Dorsolateral prefrontal cortex (tissue), 120 donors: ENCODE measurements at regions of chr5 and their contacts with region 1.

Region 1: GRCh38 chr5:113513384-113514288 is at the start of gene YTHDC2:
- DNase-seq: peak; percentile 75 to 91 (median 86)
- H3K4me3 ChIP-seq: peak within 1 kb of the TSS; percentile 63 to 98 (median 90)
- H3K27ac ChIP-seq: peak within 1 kb of the TSS; percentile 63 to 97 (median 90)
- H3K27me3 ChIP-seq: no peaks in the 10 kb centered on the region
- CTCF ChIP-seq: peak in 48 of 56 donors; percentile 7 to 59 (median 40)
- total RNA-seq, gene YTHDC2: 26.6 to 63.8 (median 40.6) TPM

Region 2: DNA sequence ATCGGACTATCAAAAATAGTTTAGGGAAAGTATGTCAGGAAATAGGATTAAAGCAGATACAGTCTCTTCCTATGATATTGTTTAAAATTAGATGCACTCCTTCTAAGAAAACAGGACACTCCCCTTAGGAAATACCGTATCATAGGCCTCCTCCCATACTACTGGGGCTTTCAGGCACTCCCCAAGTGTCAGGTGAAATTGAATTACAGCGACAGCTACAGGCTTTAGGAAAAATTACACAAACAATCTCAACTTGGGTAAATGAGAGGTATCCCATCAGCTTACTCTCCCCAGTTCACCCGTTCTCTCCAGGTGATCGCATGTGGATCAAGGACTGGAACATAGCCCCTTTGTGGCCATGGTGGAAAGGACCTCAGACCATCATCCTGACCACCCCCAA is 984.1 kb before region 1 on chr5:
- intact Hi-C with region 1: no loop called
- DNase-seq: no peak
- H3K4me3 ChIP-seq: no peak overlapping the region
- H3K27ac ChIP-seq: no peak overlapping the region
- H3K27me3 ChIP-seq: no peaks in the 10 kb centered on the region
- CTCF ChIP-seq: peak in 55 of 56 donors; percentile 14 to 73 (median 44)

Region 3: GRCh38 chr5:112976432-112977309 is 537.0 kb before region 1 on chr5 and contains the start of gene DCP2:
- intact Hi-C with region 1: loop called (anchors 2 to 5 kb)
- DNase-seq: peak; percentile 81 to 94 (median 93)
- H3K4me3 ChIP-seq: peak within 1 kb of the TSS; percentile 67 to 98 (median 88)
- H3K27ac ChIP-seq: peak within 1 kb of the TSS; percentile 54 to 96 (median 87)
- H3K27me3 ChIP-seq: no peaks in the 10 kb centered on the region
- CTCF ChIP-seq: peak in 24 of 56 donors; percentile 7 to 42 (median 16)
- total RNA-seq, gene DCP2: 38.5 to 94.6 (median 64.7) TPM

Region 4: DNA sequence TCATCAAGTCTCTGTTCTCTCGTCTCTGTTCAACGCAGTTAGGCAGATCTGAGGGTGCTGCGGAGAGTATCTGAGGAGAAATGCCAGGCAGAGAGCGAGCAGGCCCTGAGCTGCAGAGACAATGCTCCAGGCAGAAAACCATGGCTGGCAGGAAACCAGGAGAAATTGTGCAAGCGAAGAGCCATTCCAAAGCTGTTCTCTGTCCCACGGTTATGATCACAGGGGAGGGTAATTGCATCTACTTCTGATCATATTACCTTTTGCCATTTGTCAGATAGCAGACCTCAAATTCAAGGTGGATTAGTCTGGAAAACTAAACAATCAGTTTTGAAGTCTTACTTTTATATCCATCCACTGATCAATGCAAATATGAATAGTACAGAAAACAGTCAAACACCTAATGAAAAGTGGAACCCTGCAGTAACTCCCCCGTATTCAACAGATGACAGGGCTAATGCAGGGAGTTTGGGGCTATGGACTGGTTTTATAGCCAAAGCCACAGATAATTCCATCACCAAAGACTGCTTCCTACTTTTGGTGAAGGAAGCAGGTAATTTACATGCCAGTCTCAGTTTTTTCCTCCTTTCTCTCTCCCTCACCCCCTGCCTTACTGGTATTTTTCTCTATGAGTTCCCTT is 309.0 kb before region 1 on chr5:
- intact Hi-C with region 1: loop called in 1 of 2 experiments (anchors 10 kb)
- DNase-seq: peak in 5 of 10 donors; percentile 15 to 48 (median 25)
- H3K4me3 ChIP-seq: peak overlapping the region in 7 of 59 donors; percentile 0 to 19 (median 8)
- H3K27ac ChIP-seq: peak overlapping the region in 4 of 59 donors; percentile 1 to 52 (median 22)
- H3K27me3 ChIP-seq: no peaks in the 10 kb centered on the region
- CTCF ChIP-seq: no peak

Region 5: DNA sequence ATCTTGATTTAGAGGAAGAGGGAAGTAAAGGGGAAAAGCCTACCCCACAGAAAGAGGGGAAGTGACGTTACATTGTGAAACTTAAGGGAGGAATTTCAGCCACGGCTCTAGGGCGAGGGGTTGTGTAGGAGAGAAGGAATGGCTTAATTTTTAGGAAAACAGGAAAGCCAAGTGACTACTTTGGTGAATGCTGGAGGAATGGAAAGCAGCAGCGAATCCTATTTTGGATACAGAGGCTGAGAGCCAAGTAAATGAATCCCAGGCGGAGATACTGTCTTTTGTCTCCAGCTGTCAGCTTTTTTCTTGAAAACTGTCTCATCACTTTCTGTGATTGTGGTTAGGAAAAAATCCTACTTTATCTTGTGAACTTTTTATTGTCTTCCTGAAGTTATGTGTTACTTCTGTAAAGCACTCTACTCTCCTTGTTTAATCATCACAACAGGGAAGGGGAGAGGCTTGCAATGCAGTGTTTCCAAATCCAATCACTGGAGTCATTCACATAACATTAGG is 267.2 kb before region 1 on chr5:
- intact Hi-C with region 1: no loop called
- DNase-seq: no peak
- H3K4me3 ChIP-seq: peak overlapping the region in 11 of 59 donors; percentile 1 to 32 (median 18)
- H3K27ac ChIP-seq: peak overlapping the region in 28 of 59 donors; percentile 1 to 67 (median 33)
- H3K27me3 ChIP-seq: no peaks in the 10 kb centered on the region
- CTCF ChIP-seq: no peak

Region 6: DNA sequence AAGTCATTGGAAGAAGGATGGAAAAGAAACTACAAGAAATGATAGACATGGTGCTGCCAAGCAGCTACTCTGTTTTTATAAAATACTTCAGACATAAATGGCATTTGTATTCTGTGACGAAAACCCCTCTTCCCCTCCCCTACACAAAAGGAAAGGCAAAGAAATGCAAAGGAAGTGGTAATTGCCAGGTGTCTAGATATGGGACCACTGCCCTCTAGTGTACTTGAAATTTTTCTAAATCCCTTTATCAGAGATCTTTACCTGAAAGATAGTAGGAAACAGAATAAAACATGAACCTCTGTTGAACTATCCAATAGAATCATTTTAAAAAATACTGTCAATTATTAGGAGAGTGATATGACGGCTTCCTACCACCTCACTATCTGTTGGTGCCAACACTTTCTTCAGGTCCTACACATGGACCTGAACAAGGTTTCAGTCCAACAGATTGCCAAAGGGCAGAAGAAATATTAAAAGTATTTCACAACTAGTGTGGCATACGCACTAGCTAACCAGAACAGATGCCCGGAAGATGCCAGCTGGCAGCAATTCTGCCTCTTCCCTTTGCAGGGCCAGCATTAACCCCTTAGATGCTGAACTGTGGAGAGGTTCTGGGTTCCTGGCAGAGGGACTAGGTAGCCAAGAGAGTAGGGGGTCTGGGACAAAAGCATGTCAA is 183.0 kb before region 1 on chr5:
- intact Hi-C with region 1: loop called in 1 of 2 experiments (anchors 5 kb)
- DNase-seq: peak in 1 of 10 donors; percentile 34
- H3K4me3 ChIP-seq: peak overlapping the region in 4 of 59 donors; percentile 4 to 27 (median 16)
- H3K27ac ChIP-seq: peak overlapping the region in 1 of 59 donors; percentile 27
- H3K27me3 ChIP-seq: no peaks in the 10 kb centered on the region
- CTCF ChIP-seq: peak in 52 of 56 donors; percentile 2 to 75 (median 44)

Region 7: GRCh38 chr5:113378959-113379541 is 134.6 kb before region 1 on chr5:
- intact Hi-C with region 1: loop called in 1 of 2 experiments (anchors 2 kb)
- DNase-seq: peak in 8 of 10 donors; percentile 35 to 64 (median 51)
- H3K4me3 ChIP-seq: no peak overlapping the region
- H3K27ac ChIP-seq: no peak overlapping the region
- H3K27me3 ChIP-seq: no peaks in the 10 kb centered on the region
- CTCF ChIP-seq: peak; percentile 59 to 89 (median 79)

Region 8: GRCh38 chr5:113562828-113563400 is 49.3 kb after region 1 on chr5:
- intact Hi-C with region 1: loop called in 1 of 2 experiments (anchors 5 kb)
- DNase-seq: no peak
- H3K4me3 ChIP-seq: peak overlapping the region in 2 of 59 donors; percentile 0 to 18
- H3K27ac ChIP-seq: peak overlapping the region in 34 of 59 donors; percentile 2 to 77 (median 36)
- H3K27me3 ChIP-seq: no peaks in the 10 kb centered on the region
- CTCF ChIP-seq: no peak

Region 9: DNA sequence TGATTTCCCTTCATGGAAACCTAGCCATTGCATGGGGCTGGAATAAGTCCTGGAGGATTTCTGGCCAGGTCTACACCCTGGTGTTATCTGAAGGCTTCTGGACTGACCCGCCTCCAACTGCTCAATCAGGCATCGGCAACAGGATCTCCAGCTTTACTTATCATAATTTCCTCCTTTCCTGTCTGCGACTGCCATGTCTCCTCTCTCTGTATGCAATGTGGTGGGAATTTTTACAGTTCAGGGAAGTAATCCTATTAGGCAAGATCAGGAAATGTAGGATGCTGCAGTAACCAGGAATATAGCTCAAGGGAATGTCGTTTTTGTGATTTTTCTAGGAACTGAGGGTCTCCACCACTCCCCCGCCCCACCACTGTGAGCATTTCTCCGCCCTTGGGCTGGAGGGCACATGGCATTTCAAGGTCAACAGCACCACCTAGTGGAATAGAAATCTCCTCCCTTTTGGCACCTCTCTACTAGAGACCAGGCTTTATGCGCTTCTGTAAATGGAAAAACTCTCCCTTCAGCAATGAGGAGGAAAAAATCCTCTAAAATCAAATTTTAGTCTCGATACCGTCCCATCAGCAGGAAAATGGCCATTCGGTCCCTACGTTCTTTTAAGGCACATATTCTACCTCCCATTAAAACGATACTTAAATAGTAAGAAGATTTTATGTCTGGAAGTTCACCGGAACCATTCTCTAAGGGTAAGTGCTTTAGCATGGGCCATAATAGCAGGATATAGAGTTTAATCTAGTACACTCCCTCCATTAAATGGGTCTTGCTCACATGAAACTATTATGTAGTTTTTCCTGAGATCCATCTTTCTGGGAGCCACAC is 92.9 kb after region 1 on chr5:
- intact Hi-C with region 1: loop called in 1 of 2 experiments (anchors 5 kb)
- DNase-seq: peak in 5 of 10 donors; percentile 20 to 56 (median 42)
- H3K4me3 ChIP-seq: peak overlapping the region in 47 of 59 donors; percentile 1 to 56 (median 35)
- H3K27ac ChIP-seq: no peak overlapping the region
- H3K27me3 ChIP-seq: no peaks in the 10 kb centered on the region
- CTCF ChIP-seq: peak; percentile 68 to 99 (median 90)